ENCODE measurements at regions of chr20 and their contacts with region 1.

Region 1: DNA sequence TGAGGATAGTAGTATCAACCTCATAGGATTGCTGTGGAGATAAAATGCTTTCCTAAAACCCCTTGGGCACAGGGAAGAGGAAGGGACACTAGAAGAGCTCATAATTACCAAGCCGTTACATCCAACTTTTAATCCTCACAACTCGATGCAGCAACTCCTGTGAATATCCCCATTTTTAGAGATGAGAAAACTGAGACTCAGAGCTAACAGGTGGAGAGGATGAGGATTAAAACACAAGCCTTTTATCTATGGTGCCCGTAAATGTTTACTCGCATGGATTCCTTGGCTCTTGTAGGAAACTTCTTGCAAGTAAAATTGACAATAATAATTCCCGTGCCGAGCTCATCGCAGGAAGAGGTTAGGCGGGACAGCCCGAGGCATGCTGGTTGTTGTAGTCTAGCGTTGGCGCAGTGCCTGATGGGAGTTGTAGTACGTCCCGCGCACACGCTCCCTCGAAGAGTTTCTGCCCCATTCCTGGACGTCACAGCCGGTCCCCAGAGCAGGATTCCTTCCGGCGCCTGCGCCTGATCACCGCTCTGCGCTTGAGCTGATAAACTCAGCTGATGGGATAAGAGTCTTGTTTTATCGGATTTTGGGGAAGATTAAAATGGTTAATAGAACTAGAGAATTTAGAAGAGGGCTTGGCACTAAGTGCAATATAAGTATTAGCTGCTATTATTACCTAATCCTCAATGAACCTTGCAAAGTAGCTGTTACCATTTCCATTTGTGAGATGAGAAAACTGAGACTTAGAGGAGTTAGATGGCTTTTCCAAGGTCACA is 2.8 kb upstream of the UBE2V1 start:
- DNase-seq: peak; percentile 75 to 94
- ATAC-seq: peak; percentile 69 to 85 (median 76)
- H3K4me3 ChIP-seq: peak overlapping the region; percentile 26
- H3K4me3 Mint-ChIP-seq: peak overlapping the region; percentile 94
- H3K27ac ChIP-seq: no peak overlapping the region
- H3K27ac Mint-ChIP-seq: peak overlapping the region; percentile 89 to 92
- H3K4me1 ChIP-seq: peaks cover 40% of the 10 kb centered on the region
- H3K4me1 Mint-ChIP-seq: peaks cover 52% of the 10 kb centered on the region in 2 donors
- H3K27me3 ChIP-seq: no peaks in the 10 kb centered on the region
- H3K27me3 Mint-ChIP-seq: no peaks in the 10 kb centered on the region
- CTCF ChIP-seq: no peak

Region 2: GRCh38 chr20:50153485-50154377 is 37.9 kb after region 1 on chr20 and contains the start of gene PEDS1:
- intact Hi-C with region 1: loop called (anchors 2 kb)
- DNase-seq: peak; percentile 83 to 92
- ATAC-seq: peak; percentile 96 to 99 (median 98)
- H3K4me3 ChIP-seq: peak within 1 kb of the TSS; percentile 98
- H3K4me3 Mint-ChIP-seq: peak within 1 kb of the TSS; percentile 81
- H3K27ac ChIP-seq: peak within 1 kb of the TSS; percentile 74
- H3K27ac Mint-ChIP-seq: peak within 1 kb of the TSS; percentile 65 to 96
- H3K4me1 ChIP-seq: peaks cover 42% of the 10 kb centered on the region
- H3K4me1 Mint-ChIP-seq: peaks cover 30 to 52% of the 10 kb centered on the region in 2 donors
- H3K27me3 ChIP-seq: no peaks in the 10 kb centered on the region
- H3K27me3 Mint-ChIP-seq: no peaks in the 10 kb centered on the region
- CTCF ChIP-seq: no peak
- total RNA-seq, gene PEDS1: 27.4 to 32.8 (median 31.5) TPM

Region 3: DNA sequence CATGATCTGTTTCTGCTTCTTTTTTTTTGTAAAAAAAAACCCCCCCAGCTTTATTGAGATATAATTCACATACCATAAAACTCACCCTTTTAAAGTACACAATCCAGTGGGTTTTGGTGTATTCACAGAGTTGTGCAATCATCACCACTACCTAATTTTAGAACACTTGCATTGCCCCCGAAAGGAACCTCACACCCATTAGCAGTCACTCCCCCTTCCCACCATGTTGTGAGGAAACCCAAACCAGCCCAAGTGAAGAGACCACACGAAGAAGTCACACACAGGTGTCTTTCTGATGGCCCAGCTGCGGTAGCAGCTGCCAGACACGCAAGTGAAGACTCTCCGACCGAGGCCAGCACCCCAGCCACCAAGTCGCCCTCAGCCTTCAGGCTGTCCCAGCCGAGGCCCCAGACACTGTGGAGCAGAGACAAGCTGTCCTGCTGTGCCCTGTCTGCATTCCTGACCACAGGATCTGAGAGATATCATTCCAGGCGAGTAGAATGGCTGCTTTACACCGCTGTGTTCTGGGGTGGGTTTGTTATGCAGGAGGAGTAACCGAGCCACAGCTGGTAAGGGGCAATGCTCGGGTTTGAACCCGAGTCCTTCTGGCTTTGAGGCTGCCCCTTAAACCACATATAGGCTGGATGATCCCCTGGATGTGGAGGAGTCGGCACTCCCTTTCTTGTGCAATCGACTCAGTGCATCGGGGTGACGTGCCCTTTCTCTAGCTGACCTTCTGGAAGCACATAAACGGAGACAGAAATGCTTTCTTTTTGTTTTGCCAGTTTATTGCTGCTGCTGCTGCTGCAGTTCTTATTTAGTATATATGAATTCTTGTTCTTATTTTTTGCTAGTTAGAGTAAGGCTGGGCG is 335.3 kb after region 1 on chr20:
- intact Hi-C with region 1: loop called (anchors 5 kb)
- DNase-seq: peak; percentile 50 to 52
- ATAC-seq: peak; percentile 84 to 93 (median 86)
- H3K4me3 ChIP-seq: no peak overlapping the region
- H3K4me3 Mint-ChIP-seq: peak overlapping the region; percentile 63
- H3K27ac ChIP-seq: no peak overlapping the region
- H3K27ac Mint-ChIP-seq: peak overlapping the region; percentile 56 to 60
- H3K4me1 ChIP-seq: peaks cover 30% of the 10 kb centered on the region
- H3K4me1 Mint-ChIP-seq: peaks cover 26 to 36% of the 10 kb centered on the region in 2 donors
- H3K27me3 ChIP-seq: peaks cover 46% of the 10 kb centered on the region
- H3K27me3 Mint-ChIP-seq: peaks cover 68 to 88% of the 10 kb centered on the region in 2 donors
- CTCF ChIP-seq: no peak